ENCODE measurements at regions of chr5 and their contacts with region 1.

Region 1: GRCh38 chr5:146520731-146521130 is 4.7 kb upstream of the GPR151 start:
- DNase-seq: peak in 1 of 2 experiments; percentile 9
- ATAC-seq: no peak; a peak in 1 of 6 replicates
- H3K4me3 ChIP-seq: no peak overlapping the region
- H3K27ac ChIP-seq: no peak overlapping the region
- H3K4me1 ChIP-seq: no peaks in the 10 kb centered on the region
- CTCF ChIP-seq: no peak
- EP300 ChIP-seq: no peak
- POLR2A ChIP-seq: no peak
- RAD21 ChIP-seq: no peak

Region 2: DNA sequence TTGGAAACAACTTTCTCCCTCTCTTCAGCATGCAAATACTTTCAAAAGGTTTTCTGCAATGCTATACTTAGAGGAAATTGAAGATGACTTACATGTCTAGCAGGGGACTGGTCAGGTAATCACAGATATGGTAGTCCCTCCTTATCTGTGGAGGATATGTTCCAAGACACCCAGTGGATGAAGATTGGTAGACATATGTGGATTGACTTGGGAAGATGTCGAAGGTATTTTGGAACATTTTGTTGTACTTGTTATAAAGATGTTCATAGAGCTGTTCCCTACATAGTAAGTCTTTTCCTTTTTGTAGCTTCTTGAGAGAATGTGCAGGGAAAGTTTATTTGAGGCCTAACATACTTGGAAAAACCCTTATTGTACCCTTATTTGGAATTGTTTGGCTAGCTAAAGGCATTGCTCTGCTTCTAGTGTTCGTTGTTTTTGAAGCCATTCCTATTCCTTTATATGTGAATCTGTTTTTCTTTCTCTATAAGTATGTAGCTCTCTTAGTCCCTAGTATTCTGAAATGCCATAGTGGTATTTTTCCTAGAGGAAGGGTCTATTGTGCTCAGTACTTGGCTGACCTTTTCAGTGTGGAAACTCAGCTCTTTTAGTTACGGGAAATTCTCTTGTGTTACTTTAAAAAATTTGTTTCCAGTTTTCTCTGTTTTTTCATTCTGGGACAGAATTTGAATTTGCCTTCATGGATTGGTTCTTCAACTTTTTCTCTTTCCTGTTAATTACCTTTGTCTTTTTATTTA is 30.5 kb before region 1 on chr5:
- CTCF ChIA-PET with region 1: no interaction called
- POLR2A ChIA-PET with region 1: no interaction called
- DNase-seq: no peak
- ATAC-seq: no peak
- H3K4me3 ChIP-seq: no peak overlapping the region
- H3K27ac ChIP-seq: no peak overlapping the region
- H3K4me1 ChIP-seq: no peaks in the 10 kb centered on the region
- CTCF ChIP-seq: no peak
- EP300 ChIP-seq: no peak
- POLR2A ChIP-seq: no peak
- RAD21 ChIP-seq: no peak

Region 3: GRCh38 chr5:146533260-146533857 is 12.6 kb after region 1 on chr5:
- CTCF ChIA-PET with region 1: interaction called, 29 read pairs
- POLR2A ChIA-PET with region 1: no interaction called
- DNase-seq: peak; percentile 69 to 77
- ATAC-seq: peak; percentile 93 to 97
- H3K4me3 ChIP-seq: no peak overlapping the region
- H3K27ac ChIP-seq: no peak overlapping the region
- H3K4me1 ChIP-seq: no peaks in the 10 kb centered on the region
- CTCF ChIP-seq: peak; percentile 86
- EP300 ChIP-seq: no peak
- POLR2A ChIP-seq: no peak
- RAD21 ChIP-seq: peak; percentile 82 to 89

Measured in A549 (cell line).